ENCODE measurements at regions of chr1 and their contacts with region 1.

Region 1: GRCh38 chr1:42439940-42440339 is 15.9 kb downstream of the ZMYND12 start:
- DNase-seq: peak; percentile 82
- ATAC-seq: peak; percentile 49
- H3K4me3 ChIP-seq: no peak overlapping the region
- H3K27ac ChIP-seq: no peak overlapping the region
- H3K4me1 ChIP-seq: peaks cover 1% of the 10 kb centered on the region; the same call in 1 of the 2 replicates
- H3K27me3 ChIP-seq: peaks cover 4% of the 10 kb centered on the region
- CTCF ChIP-seq: no peak
- POLR2A ChIP-seq: no peak
- RAD21 ChIP-seq: no peak

Region 2: DNA sequence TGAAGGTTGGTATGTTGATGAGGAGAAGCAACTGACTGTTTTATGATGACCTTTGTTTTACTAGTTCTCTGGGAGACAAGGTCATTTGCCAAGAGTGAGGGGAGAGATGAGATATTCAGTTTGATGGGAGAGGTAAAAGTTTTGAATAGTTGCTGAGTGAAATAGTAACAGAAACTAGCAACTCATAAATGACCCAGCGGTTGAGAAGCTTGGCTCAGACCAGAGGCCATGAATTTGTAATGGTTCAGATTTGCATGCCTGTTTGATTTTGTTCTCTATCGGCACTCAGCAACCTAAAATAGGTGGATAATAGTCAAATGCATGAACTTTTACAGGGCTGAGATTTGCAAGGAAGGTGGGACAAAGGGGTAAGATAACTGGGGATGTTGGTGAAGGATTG is 29.8 kb after region 1 on chr1:
- CTCF ChIA-PET with region 1: no interaction called
- POLR2A ChIA-PET with region 1: no interaction called
- dilution Hi-C with region 1: no loop called
- in situ Hi-C with region 1: no loop called
- intact Hi-C with region 1: loop called (anchors 1 kb)
- DNase-seq: no peak
- ATAC-seq: no peak
- H3K4me3 ChIP-seq: no peak overlapping the region
- H3K27ac ChIP-seq: no peak overlapping the region
- H3K4me1 ChIP-seq: no peaks in the 10 kb centered on the region
- H3K27me3 ChIP-seq: peaks cover 8% of the 10 kb centered on the region; the same call in 1 of the 2 replicates
- CTCF ChIP-seq: no peak
- POLR2A ChIP-seq: no peak
- RAD21 ChIP-seq: no peak

Region 3: DNA sequence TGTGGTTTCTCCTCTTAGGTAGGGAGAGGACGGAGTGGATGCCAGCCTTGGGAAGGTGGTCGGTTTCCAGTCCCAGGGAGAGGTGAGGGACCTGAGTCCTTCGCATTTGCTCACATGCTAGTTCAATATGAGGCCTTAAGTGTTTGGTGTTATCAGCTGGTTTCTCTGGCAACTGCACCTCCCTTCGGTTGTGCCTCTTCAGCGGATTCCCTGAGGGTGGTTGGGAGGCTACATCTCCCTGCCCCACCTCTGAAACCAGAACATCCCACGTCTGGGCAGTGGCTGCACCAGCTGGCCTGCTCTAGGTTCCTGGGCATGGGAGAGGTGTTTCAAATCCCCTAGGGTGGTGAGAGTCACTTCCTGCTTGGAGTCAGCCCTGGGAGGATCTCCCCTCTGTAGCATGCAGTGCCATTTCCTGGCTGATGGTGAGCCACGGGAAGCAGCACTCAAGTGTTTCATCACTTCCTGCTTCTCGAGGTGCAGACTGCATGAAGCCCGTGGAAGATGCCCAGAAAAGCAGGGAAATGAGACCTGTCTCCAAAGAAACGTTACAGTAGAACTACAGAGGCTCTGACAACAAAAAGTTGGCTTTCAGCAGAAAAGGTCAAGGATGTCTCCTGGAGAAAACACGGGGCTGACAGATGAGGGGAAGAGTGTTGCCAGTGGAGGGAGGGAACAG is 834.3 kb after region 1 on chr1:
- CTCF ChIA-PET with region 1: no interaction called
- POLR2A ChIA-PET with region 1: no interaction called
- dilution Hi-C with region 1: no loop called
- in situ Hi-C with region 1: no loop called
- intact Hi-C with region 1: no loop called
- DNase-seq: peak; percentile 58
- ATAC-seq: peak; percentile 59; the same call in 1 of the 2 replicates
- H3K4me3 ChIP-seq: no peak overlapping the region
- H3K27ac ChIP-seq: no peak overlapping the region
- H3K4me1 ChIP-seq: 0 out of 2 replicates have a peak, but pooled peaks cover 3% of the 10 kb centered on the region
- H3K27me3 ChIP-seq: peaks cover 10% of the 10 kb centered on the region; the same call in 1 of the 2 replicates
- CTCF ChIP-seq: no peak
- POLR2A ChIP-seq: no peak
- RAD21 ChIP-seq: no peak